Heart right ventricle (tissue), 16 donors: ENCODE measurements at regions of chr2 and their contacts with region 1.

Region 1: DNA sequence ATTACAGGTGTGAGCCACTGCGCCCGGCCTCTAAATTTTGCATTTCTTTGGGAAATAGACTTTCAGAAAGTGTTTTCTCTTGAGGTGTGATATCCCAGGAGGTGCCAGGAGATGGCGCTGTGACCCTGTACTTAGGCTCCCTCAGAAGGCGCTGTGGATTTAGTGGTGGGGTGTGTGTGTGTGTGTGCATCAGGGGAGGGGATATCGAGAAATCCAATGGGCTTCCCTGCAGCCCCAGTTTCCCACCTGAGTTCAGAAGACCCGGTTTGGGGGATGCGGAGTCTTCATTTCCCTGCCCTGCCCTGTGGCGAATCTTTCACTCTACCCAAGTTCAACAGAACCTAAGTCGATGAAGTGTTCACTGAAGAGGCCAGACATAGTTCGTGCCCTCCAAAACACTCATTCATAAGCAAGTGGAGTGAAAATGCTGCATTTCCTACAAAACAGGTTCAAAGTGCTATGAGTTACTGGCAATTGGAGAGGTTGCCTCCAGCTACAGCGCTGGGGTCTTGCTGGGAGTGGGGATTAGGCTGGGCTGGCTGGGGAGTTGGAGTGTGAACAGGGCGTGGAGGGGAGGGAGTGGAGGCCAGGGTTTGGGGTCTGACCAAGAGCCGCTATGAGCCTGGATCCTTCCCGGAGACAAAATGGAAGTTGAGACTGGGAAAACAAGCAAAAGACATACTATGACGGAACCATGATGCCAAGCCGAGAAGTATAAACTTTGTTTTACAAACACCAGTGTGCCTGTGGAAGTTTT is 6.5 kb upstream of the WNT6 start:
- DNase-seq: peak in 1 of 2 donors; percentile 34
- ATAC-seq: peak in 7 of 8 donors; percentile 16 to 69 (median 52)
- H3K4me3 ChIP-seq: no peak overlapping the region
- H3K27ac ChIP-seq: no peak overlapping the region
- H3K4me1 ChIP-seq: peaks cover 0 to 9% (median 0%) of the 10 kb centered on the region in 9 donors
- H3K27me3 ChIP-seq: peaks cover 0 to 96% (median 82%) of the 10 kb centered on the region in 7 donors
- CTCF ChIP-seq: peak; percentile 31 to 77 (median 70)

Region 2: GRCh38 chr2:218456849-218457248 is 396.2 kb before region 1 on chr2:
- intact Hi-C with region 1: loop called in 1 of 10 experiments (anchors 5 kb)
- DNase-seq: no peak
- ATAC-seq: no peak
- H3K4me3 ChIP-seq: no peak overlapping the region
- H3K27ac ChIP-seq: no peak overlapping the region
- H3K4me1 ChIP-seq: peaks cover 0 to 14% (median 0%) of the 10 kb centered on the region in 9 donors
- H3K27me3 ChIP-seq: no peaks in the 10 kb centered on the region
- CTCF ChIP-seq: no peak

Region 3: GRCh38 chr2:218710687-218711549 is 142.2 kb before region 1 on chr2 and contains the start of gene TTLL4:
- intact Hi-C with region 1: loop called in 4 of 10 experiments (anchors 5 kb)
- DNase-seq: peak; percentile 98 to 99
- ATAC-seq: peak; percentile 98 to 100 (median 99)
- H3K4me3 ChIP-seq: peak within 1 kb of the TSS; percentile 70 to 94 (median 82)
- H3K27ac ChIP-seq: peak within 1 kb of the TSS; percentile 63 to 94 (median 90)
- H3K4me1 ChIP-seq: peaks cover 0 to 47% (median 12%) of the 10 kb centered on the region in 9 donors
- H3K27me3 ChIP-seq: no peaks in the 10 kb centered on the region
- CTCF ChIP-seq: peak; percentile 78 to 98 (median 90)
- total RNA-seq, gene TTLL4: 4.3 to 8.2 (median 6.4) TPM

Region 4: DNA sequence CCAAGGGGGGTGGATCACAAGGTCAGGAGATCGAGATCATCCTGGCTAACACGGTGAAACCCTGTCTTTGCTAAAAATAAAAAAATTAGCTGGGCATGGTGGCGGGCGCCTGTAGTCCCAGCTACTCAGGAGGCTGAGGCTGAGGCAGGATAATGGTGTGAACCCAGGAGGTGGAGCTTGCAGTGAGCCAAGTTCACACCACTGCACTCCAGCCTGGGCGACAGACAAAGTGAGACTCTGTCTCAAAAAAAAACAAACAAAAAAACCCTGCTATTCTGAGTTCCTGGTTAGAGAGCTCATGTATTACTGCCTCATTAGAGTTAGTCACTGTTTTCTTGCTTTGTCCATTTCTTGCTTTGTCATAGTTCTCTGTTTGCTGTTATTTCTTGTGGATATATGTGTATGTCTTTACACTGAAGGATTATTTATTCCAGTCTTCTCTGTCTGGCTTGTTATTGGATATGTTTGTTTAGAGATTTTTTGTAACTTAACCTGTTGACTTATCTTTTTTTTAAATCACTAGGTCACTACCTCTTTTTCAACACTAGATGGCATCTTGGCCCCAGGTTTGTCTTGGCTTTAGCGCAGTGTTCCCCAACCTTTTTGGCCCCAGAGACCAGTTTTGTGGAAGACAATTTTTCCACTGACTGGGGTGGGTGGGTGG is 125.5 kb before region 1 on chr2:
- intact Hi-C with region 1: loop called in 3 of 10 experiments (anchors 5 to 10 kb)
- DNase-seq: no peak
- ATAC-seq: no peak
- H3K4me3 ChIP-seq: no peak overlapping the region
- H3K27ac ChIP-seq: no peak overlapping the region
- H3K4me1 ChIP-seq: peaks cover 0 to 38% (median 3%) of the 10 kb centered on the region in 9 donors
- H3K27me3 ChIP-seq: no peaks in the 10 kb centered on the region
- CTCF ChIP-seq: peak in 6 of 9 donors; percentile 7 to 48 (median 24)

Region 5: DNA sequence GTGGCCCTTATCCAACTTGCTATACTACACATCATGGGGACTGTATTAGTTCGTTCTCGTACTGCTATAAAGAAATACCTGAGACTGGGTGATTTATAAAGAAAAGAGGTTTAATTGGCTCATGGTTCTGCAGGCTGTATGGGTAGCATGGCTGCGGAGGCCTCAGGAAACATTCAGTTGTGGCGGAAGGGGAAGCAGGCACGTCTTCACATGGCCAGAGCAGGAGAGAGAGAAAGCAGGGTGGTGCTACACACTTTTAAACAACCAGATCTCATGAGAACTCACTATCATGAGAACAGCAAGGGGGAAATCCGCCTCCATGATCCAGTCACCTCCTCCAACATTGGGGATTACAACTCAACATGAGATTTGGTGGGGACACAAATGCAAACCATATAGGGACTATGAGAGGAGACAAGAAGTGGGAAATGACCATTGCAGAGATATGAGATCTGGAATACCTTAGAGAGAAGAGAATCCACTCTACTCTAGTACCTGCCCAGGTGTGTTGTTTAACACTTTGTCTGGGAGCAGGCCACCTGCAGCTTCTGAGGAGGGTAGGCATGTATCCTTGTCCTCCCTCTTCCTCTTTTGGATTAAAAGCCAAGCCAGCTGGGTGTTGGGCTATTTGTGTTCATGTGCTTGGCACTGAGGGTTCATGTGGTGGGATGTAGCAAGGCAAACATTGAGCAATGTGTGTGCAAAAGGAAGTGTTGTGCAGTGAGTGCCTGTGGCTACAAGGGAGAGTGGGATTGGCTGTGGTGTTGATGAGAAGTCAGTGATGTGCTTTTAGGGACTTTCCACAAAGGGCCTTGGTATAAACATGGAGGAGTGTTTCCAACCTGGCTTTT is 119.7 kb before region 1 on chr2:
- intact Hi-C with region 1: loop called in 3 of 10 experiments (anchors 5 to 10 kb)
- DNase-seq: no peak
- ATAC-seq: peak in 5 of 8 donors; percentile 42 to 85 (median 46)
- H3K4me3 ChIP-seq: no peak overlapping the region
- H3K27ac ChIP-seq: peak overlapping the region in 4 of 10 donors; percentile 0 to 83 (median 12)
- H3K4me1 ChIP-seq: peaks cover 0 to 55% (median 3%) of the 10 kb centered on the region in 9 donors
- H3K27me3 ChIP-seq: no peaks in the 10 kb centered on the region
- CTCF ChIP-seq: no peak

Region 6: DNA sequence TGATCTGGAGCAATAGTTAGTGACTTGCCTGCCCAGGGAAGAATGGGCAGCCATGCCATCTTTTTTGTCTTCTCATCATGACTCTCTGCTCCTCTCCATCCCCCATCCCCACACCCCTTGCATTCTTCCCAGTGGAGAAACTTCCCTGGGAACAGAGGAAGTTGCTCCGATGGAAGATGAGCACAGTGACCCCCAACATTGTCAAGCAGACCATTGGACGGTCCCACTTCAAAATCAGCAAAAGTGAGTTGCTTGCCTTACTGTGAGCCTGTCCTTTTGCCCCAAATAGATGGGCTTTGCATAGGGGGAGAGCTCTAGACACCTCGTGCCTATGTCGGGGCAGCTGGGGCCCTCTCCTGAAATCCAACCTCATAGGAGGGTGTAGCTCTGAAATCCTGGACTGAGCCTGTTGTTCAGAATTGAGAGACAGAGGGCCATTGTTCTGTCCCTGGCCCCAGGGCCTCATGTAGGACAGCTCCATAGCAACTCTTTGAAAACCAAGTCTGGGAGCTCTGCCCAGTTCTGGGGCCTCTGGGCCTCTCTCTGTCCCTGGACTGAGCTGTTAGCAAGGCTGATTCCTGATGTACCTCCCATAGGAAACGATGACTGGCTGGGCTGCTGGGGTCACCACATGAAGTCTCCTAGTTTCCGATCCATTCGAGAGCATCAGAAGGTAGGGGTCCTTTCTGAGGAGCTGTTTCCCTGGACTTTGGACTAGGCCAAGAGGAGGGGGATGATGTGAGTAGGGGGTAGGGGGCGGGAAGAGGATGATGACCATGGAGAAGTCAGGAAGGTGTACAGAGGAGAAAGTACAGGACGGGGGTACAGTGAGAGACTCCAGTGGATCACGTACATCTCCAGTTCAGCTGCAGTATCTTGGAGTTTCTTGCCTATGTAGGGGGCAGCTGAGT is 107.3 kb before region 1 on chr2:
- intact Hi-C with region 1: no loop called
- DNase-seq: peak; percentile 64 to 82
- ATAC-seq: peak; percentile 94 to 98 (median 97)
- H3K4me3 ChIP-seq: no peak overlapping the region
- H3K27ac ChIP-seq: peak overlapping the region; percentile 1 to 88 (median 71)
- H3K4me1 ChIP-seq: peaks cover 0 to 47% (median 19%) of the 10 kb centered on the region in 9 donors
- H3K27me3 ChIP-seq: no peaks in the 10 kb centered on the region
- CTCF ChIP-seq: no peak

Region 7: GRCh38 chr2:218898109-218898878 is 45.2 kb after region 1 on chr2:
- intact Hi-C with region 1: loop called in 4 of 10 experiments (anchors 1 to 2 kb)
- DNase-seq: peak; percentile 47 to 80
- ATAC-seq: peak; percentile 80 to 93 (median 84)
- H3K4me3 ChIP-seq: peak overlapping the region in 7 of 10 donors; percentile 1 to 31 (median 15)
- H3K27ac ChIP-seq: no peak overlapping the region
- H3K4me1 ChIP-seq: peaks cover 4 to 36% (median 24%) of the 10 kb centered on the region in 9 donors
- H3K27me3 ChIP-seq: peaks cover 33 to 100% (median 99%) of the 10 kb centered on the region in 7 donors
- CTCF ChIP-seq: peak; percentile 78 to 98 (median 95)

Region 8: GRCh38 chr2:219155054-219155644 is 302.1 kb after region 1 on chr2:
- intact Hi-C with region 1: loop called in 2 of 10 experiments (anchors 10 kb)
- DNase-seq: peak in 1 of 2 donors; percentile 57
- ATAC-seq: peak in 3 of 8 donors; percentile 27 to 53 (median 50)
- H3K4me3 ChIP-seq: no peak overlapping the region
- H3K27ac ChIP-seq: no peak overlapping the region
- H3K4me1 ChIP-seq: peaks cover 0 to 12% (median 6%) of the 10 kb centered on the region in 9 donors
- H3K27me3 ChIP-seq: no peaks in the 10 kb centered on the region
- CTCF ChIP-seq: peak; percentile 49 to 77 (median 66)